ENCODE measurements at regions of chr3 and their contacts with region 1.

Region 1: DNA sequence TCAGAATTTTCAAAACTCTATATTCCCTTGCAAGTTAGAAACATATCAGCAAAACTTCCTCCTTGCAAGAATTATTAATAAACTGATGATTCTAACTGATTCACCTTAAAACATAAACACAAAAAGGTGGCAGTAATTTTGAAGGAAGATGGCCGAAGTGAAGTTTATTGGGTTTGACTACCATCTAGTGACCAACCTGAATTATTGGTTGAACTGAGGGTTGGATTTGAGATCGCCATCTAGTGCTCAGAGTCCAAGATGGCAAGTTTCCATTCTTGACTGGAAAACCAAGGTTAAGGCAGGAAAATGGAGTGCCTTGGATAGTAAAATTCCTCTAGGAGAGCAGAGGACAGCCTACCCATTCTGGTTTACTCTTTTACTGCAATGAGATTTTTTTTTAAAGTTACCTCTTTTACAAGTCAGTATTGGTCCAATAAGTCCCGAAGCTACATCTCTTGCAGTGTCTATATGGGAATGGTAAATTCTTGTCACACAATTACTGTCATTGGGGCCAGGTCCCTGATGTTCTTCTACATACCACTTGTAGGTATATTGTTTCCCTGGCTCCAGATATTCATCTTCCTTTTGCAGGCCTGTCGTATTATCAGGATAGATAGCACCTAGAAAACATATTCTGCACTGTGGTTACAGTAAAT is 51.6 kb upstream of the CP start:
- DNase-seq: peak; percentile 93
- H3K4me3 ChIP-seq: no peak overlapping the region
- H3K27ac ChIP-seq: no peak overlapping the region
- H3K4me1 ChIP-seq: peaks cover 25% of the 10 kb centered on the region
- H3K27me3 ChIP-seq: no peaks in the 10 kb centered on the region

Region 2: DNA sequence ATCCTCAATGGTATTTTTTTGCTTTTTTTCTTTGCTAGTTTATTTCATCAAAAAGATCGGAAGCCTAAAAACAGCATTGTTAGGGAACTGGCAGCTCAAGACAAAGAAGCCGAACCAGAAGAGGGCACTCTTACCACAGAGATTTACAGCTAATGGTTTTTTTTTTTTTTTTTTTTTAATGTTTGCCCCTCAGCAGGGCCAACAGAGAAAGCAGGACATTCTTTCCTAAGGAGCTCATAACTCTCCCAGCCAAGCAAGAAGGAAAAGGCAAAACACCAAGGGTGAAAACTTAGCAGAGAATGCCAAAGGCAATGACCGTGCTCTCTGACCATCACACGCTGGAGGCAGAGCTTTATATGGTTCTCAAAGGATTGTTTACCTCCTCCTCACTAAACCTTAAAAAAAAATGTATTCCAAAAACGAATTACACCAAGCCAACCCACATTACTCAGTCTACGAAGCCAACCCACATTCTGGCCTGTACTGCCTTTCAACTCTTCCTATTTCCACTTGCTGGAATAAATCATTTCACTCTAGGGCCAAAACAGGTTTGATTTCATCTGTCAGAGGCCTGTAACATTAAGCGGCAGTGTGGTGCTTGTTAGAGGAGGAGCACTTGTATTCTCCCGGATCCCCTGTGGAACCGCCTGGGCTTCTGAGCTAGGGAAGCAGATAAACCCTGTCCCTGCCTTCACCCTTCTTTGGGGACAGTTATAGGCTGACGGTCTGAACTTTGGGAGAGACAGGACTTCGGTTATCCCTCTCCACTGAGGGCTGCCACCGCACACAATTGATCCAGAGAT is 317.5 kb before region 1 on chr3:
- in situ Hi-C with region 1: loop called (anchors 10 kb)
- DNase-seq: peak; percentile 94
- H3K4me3 ChIP-seq: peak overlapping the region; percentile 1; the same call in 1 of the 2 replicates
- H3K27ac ChIP-seq: peak overlapping the region; percentile 92
- H3K4me1 ChIP-seq: peaks cover 15% of the 10 kb centered on the region
- H3K27me3 ChIP-seq: no peaks in the 10 kb centered on the region

Region 3: GRCh38 chr3:149016669-149017541 is 256.3 kb before region 1 on chr3:
- in situ Hi-C with region 1: no loop called
- DNase-seq: peak; percentile 96
- H3K4me3 ChIP-seq: 0 out of 2 replicates have a peak overlapping the region, but pooled peaks have one; percentile 9
- H3K27ac ChIP-seq: peak overlapping the region; percentile 78
- H3K4me1 ChIP-seq: peaks cover 60% of the 10 kb centered on the region
- H3K27me3 ChIP-seq: no peaks in the 10 kb centered on the region

Region 4: GRCh38 chr3:149114458-149114857 is 158.8 kb before region 1 on chr3:
- in situ Hi-C with region 1: loop called (anchors 10 kb)
- DNase-seq: no peak
- H3K4me3 ChIP-seq: no peak overlapping the region
- H3K27ac ChIP-seq: no peak overlapping the region
- H3K4me1 ChIP-seq: no peaks in the 10 kb centered on the region
- H3K27me3 ChIP-seq: no peaks in the 10 kb centered on the region

Measured in GM23248 (cell line).